HepG2 (cell line): ENCODE measurements at regions of chr2 and their contacts with region 1.

Region 1: DNA sequence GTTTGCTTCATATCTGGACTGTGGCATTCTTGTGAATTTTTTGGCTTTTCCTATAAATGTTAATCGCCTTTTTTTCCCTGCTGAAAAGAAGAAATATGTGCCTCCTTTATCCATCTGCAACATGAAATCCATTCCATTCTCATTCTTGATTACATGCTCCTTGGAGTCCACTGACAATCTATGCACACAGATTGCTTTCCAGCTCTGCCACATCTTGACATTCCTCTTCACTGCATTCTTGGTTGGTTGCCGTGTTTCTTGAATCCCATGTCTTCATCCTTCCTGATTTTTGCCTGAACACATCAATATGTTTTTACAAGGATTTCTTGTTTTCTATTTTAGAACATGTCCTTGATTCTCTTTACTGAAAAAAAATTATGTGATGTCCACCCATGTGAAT is 26.7 kb upstream of the BIRC6 start:
- DNase-seq: no peak
- ATAC-seq: no peak
- H3K4me3 ChIP-seq: peak overlapping the region in 1 of 3 experiments; percentile 60; a peak in 2 of 6 replicates
- H3K27ac ChIP-seq: peak overlapping the region; percentile 93
- H3K4me1 ChIP-seq: peaks cover 49% of the 10 kb centered on the region
- H3K27me3 ChIP-seq: no peaks in the 10 kb centered on the region
- CTCF ChIP-seq: no peak
- EP300 ChIP-seq: no peak
- POLR2A ChIP-seq: no peak
- RAD21 ChIP-seq: no peak

Region 2: DNA sequence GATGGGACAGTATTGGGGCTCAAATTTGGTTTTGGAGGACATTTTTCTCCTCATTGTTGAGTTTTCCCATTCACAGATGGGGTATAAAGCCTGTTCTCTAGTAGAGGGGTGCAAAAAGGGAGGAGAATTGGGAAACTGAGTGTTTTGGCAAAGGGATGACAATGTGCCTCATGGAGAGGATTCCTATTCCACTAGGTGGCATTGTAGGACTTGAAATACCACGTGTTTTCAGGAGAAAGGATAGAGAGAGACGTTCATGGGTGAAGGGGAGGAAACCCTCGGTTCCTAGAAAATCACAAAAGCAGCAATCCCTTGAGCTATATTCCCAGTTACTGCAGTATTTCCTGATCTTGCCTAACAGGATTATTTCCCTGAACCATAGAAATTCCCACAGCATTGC is 635.7 kb before region 1 on chr2:
- CTCF ChIA-PET with region 1: no interaction called
- POLR2A ChIA-PET with region 1: no interaction called
- in situ Hi-C with region 1: no loop called
- intact Hi-C with region 1: loop called (anchors 10 kb)
- DNase-seq: peak; percentile 43
- ATAC-seq: peak; percentile 77
- H3K4me3 ChIP-seq: no peak overlapping the region
- H3K27ac ChIP-seq: no peak overlapping the region
- H3K4me1 ChIP-seq: no peaks in the 10 kb centered on the region
- H3K27me3 ChIP-seq: no peaks in the 10 kb centered on the region
- CTCF ChIP-seq: peak; percentile 66
- EP300 ChIP-seq: no peak
- POLR2A ChIP-seq: no peak
- RAD21 ChIP-seq: peak; percentile 62

Region 3: GRCh38 chr2:32277674-32278482 is 52.3 kb before region 1 on chr2 and contains the start of gene YIPF4:
- CTCF ChIA-PET with region 1: no interaction called
- POLR2A ChIA-PET with region 1: interaction called, 4 read pairs
- in situ Hi-C with region 1: no loop called
- intact Hi-C with region 1: loop called (anchors 5 kb)
- DNase-seq: peak; percentile 96
- ATAC-seq: peak; percentile 98
- H3K4me3 ChIP-seq: peak within 1 kb of the TSS; percentile 91 to 98 (median 93)
- H3K27ac ChIP-seq: peak within 1 kb of the TSS; percentile 80
- H3K4me1 ChIP-seq: peaks cover 42% of the 10 kb centered on the region
- H3K27me3 ChIP-seq: no peaks in the 10 kb centered on the region; a peak in 1 of 5 replicates
- CTCF ChIP-seq: no peak
- EP300 ChIP-seq: no peak; a peak in 1 of 4 replicates
- POLR2A ChIP-seq: peak; percentile 77 to 86
- RAD21 ChIP-seq: peak; percentile 72
- total RNA-seq, gene YIPF4: 39.1 and 43.9 TPM in 2 replicates

Region 4: GRCh38 chr2:32356735-32357644 is 26.9 kb after region 1 on chr2 and contains the start of gene BIRC6:
- CTCF ChIA-PET with region 1: no interaction called
- POLR2A ChIA-PET with region 1: interaction called, 36 read pairs
- in situ Hi-C with region 1: no loop called
- intact Hi-C with region 1: loop called (anchors 2 kb)
- DNase-seq: peak; percentile 97
- ATAC-seq: peak; percentile 96
- H3K4me3 ChIP-seq: peak within 1 kb of the TSS; percentile 96 to 100 (median 100)
- H3K27ac ChIP-seq: peak within 1 kb of the TSS; percentile 92
- H3K4me1 ChIP-seq: peaks cover 43% of the 10 kb centered on the region
- H3K27me3 ChIP-seq: no peaks in the 10 kb centered on the region; a peak in 1 of 5 replicates
- CTCF ChIP-seq: peak; percentile 37
- EP300 ChIP-seq: peak in 1 of 2 experiments; percentile 10; a peak in 3 of 4 replicates
- POLR2A ChIP-seq: peak; percentile 97 to 98
- RAD21 ChIP-seq: peak; percentile 82
- total RNA-seq, gene BIRC6: 120 and 158 TPM in 2 replicates

Region 5: GRCh38 chr2:32372519-32373182 is 42.5 kb after region 1 on chr2:
- CTCF ChIA-PET with region 1: no interaction called
- POLR2A ChIA-PET with region 1: no interaction called
- in situ Hi-C with region 1: no loop called
- intact Hi-C with region 1: no loop called
- DNase-seq: no peak
- ATAC-seq: no peak; the same call in 2 of the 3 replicates
- H3K4me3 ChIP-seq: no peak overlapping the region
- H3K27ac ChIP-seq: no peak overlapping the region
- H3K4me1 ChIP-seq: peaks cover 51% of the 10 kb centered on the region
- H3K27me3 ChIP-seq: no peaks in the 10 kb centered on the region
- CTCF ChIP-seq: no peak
- EP300 ChIP-seq: no peak
- POLR2A ChIP-seq: no peak
- RAD21 ChIP-seq: no peak